Activated CD4-positive, alpha-beta T cell treated with anti-CD3 and anti-CD28 coated beads, Interleukin-2, amount 10 ng/mL, durations not matched to agents 24 days and 14 days (primary cell): ENCODE measurements at regions of chr21 and their contacts with region 1.

Region 1: GRCh38 chr21:43775795-43776430 is at the start of gene CSTB:
- DNase-seq: peak; percentile 97
- H3K4me3 Mint-ChIP-seq: peak within 1 kb of the TSS; percentile 97
- H3K27ac Mint-ChIP-seq: peak within 1 kb of the TSS; percentile 79
- H3K4me1 Mint-ChIP-seq: peaks cover 54% of the 10 kb centered on the region
- H3K27me3 Mint-ChIP-seq: no peaks in the 10 kb centered on the region
- total RNA-seq, gene CSTB: 59.2 and 59.5 TPM in 2 replicates

Region 2: DNA sequence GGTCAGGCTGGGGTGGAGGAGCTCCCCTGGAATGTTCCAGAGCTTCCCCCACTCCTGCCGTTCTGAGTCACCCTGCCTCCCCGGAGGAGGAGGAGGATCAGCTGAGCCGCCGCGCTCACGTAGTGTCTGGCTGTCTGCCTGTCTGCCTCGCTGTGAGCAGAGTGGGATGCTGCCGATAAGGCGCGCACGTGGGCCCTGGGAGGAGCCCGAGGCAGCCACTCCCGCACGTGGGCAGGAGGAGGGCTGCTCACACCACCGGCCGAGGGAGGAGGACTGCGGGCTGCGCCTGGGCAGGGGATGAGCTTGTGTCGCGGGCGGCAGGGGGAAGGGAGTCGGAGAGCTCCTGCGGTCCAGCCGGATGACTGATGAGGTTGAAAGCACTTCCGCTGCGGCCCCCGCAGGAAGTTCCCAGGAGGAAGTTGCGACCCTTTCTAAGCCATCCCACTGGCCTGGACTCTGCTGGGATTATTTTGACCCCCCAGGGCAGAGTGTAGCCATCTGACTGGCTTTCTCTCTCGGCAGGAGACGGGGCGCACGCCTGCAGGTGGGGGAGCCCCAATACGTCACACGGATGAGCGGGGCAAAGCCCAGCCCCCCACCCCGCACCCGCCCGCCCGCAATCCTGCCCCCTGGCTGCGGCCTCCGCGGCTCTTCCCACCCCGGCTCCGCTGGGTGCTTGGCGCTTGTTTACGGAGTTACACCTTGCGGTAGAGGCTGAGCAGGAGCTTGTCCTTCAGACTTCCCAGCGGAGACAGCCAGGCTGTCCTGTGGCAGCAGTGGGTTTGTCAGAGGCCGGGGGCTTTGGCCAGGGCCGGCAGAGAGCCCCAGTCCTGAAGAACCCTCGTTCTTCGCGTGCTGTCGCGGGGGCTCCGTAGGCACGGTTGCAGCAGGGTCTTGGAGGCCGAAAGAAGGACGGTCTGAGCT is 47.2 kb before region 1 on chr21:
- intact Hi-C with region 1: loop called (anchors 5 kb)
- DNase-seq: peak; percentile 92
- H3K4me3 Mint-ChIP-seq: peak overlapping the region; percentile 89
- H3K27ac Mint-ChIP-seq: peak overlapping the region; percentile 87
- H3K4me1 Mint-ChIP-seq: peaks cover 53% of the 10 kb centered on the region
- H3K27me3 Mint-ChIP-seq: no peaks in the 10 kb centered on the region

Region 3: GRCh38 chr21:43789276-43790009 is 13.5 kb after region 1 on chr21 and contains the start of gene RRP1:
- intact Hi-C with region 1: loop called (anchors 1 kb)
- DNase-seq: peak; percentile 99
- H3K4me3 Mint-ChIP-seq: peak within 1 kb of the TSS; percentile 93
- H3K27ac Mint-ChIP-seq: peak within 1 kb of the TSS; percentile 90
- H3K4me1 Mint-ChIP-seq: peaks cover 20% of the 10 kb centered on the region
- H3K27me3 Mint-ChIP-seq: no peaks in the 10 kb centered on the region
- total RNA-seq, gene RRP1: 94.4 and 99.4 TPM in 2 replicates